ENCODE measurements at regions of chr5 and their contacts with region 1.

Region 1: GRCh38 chr5:71782771-71783770 is 64.0 kb downstream of the CARTPT start:
- DNase-seq: peak; percentile 80 to 90 (median 87)
- H3K4me3 ChIP-seq: peak overlapping the region; percentile 17
- H3K27ac ChIP-seq: peak overlapping the region in 1 of 2 donors; percentile 9
- H3K4me1 ChIP-seq: no peaks in the 10 kb centered on the region
- H3K27me3 ChIP-seq: no peaks in the 10 kb centered on the region
- CTCF ChIP-seq: peak; percentile 41 to 73 (median 70)
- EP300 ChIP-seq: no peak
- POLR2A ChIP-seq: no peak

Region 2: DNA sequence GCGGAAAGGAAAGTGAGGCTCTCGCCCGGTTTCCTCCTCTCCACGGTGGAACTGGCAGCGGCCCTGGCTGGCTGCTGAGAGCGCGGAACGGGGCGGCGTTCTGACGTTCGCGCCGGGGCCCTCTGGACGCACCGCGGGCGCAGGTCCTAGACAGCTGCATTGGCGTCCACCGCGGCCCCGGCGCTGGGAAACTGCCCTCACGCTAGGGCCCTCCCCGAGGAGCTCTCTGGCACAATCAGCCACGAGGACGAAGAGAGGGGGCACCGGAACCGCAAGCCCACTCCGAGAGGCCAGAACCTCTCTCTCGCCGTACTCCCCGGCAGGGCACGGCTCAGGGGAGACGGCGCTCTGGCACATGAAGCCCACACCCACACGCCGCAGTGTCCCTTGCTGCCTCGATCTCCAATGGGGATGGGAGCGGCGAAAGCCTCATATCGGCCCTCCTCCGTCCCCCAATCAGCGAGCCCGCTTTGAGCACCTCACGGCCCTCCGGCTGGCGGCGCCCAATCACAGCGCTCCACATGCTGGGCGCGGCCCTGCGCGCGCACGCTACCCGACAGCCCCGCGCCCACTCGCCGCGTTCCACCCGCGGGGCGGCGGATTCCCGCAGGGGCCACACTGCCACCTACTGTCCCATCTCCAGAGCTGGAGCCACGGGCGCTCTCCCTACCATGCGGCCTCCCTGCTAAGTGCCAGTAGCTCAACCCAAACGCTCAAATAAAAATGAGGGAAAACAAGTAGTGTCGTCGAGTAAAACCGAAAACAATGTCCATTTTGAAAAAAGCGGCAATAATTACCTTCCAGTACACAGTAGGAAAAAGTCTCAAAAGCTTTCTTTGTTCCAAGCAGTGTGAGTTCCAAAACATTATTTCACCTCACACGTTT is 525.1 kb after region 1 on chr5:
- intact Hi-C with region 1: loop called (anchors 2 to 5 kb)
- DNase-seq: peak; percentile 96 to 98 (median 97)
- H3K4me3 ChIP-seq: peak overlapping the region; percentile 80
- H3K27ac ChIP-seq: peak overlapping the region; percentile 85 to 96
- H3K4me1 ChIP-seq: no peaks in the 10 kb centered on the region
- H3K27me3 ChIP-seq: no peaks in the 10 kb centered on the region
- CTCF ChIP-seq: peak; percentile 88 to 98 (median 95)
- EP300 ChIP-seq: peak; percentile 23
- POLR2A ChIP-seq: peak; percentile 90

Region 3: DNA sequence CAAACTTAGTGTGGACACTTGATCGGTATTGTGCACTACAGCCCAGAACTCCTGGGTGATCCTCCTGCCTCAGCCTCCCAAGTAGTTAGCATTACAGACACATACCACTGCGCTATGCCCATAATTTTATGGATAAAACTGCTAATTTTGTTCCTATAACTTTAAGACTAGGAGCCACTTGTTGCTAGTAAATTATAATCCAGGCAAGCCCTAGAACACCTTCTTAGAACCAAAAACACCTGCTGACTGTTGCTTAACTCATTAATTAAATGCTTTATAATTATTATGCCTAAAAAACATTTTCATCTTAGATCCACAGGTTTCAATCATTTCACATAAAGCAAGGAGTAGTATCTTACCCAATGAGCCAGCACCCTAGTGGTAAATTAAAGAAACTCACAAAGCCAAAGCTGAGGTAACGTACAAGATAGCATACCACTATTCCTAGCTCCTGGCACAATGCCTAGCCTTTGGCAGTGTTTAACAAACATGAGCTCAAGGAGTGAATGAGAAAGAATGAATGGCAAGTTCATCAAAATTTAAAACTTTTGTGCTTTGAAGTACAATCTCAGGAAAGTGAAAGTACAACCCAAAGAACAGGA is 531.6 kb after region 1 on chr5:
- intact Hi-C with region 1: loop called (anchors 2 to 5 kb)
- DNase-seq: peak in 2 of 5 donors; percentile 20 to 43
- H3K4me3 ChIP-seq: no peak overlapping the region
- H3K27ac ChIP-seq: no peak overlapping the region
- H3K4me1 ChIP-seq: no peaks in the 10 kb centered on the region
- H3K27me3 ChIP-seq: no peaks in the 10 kb centered on the region
- CTCF ChIP-seq: no peak
- EP300 ChIP-seq: no peak
- POLR2A ChIP-seq: no peak

Region 4: DNA sequence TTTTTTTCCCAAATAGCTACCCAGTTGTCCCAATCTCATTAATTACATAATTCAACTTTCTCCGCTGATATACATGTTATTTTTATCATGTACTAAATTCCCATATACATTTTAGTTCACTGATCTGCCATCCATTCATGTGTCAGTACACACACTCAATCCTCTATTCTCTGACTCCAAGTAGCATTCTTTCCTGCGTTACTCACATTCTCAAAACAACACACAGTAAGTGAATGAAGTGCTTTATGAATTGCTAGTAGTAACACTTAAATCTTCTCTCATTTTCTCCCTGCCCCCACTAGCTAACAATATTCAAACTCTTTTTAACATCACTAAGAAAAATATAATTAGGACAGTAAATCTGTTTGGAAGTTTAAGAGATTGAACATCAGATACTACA is 715.2 kb after region 1 on chr5:
- intact Hi-C with region 1: no loop called
- DNase-seq: no peak
- H3K4me3 ChIP-seq: no peak overlapping the region
- H3K27ac ChIP-seq: no peak overlapping the region
- H3K4me1 ChIP-seq: no peaks in the 10 kb centered on the region
- H3K27me3 ChIP-seq: no peaks in the 10 kb centered on the region
- CTCF ChIP-seq: no peak
- EP300 ChIP-seq: no peak
- POLR2A ChIP-seq: no peak